ENCODE measurements at regions of chr19 and their contacts with region 1.

Region 1: DNA sequence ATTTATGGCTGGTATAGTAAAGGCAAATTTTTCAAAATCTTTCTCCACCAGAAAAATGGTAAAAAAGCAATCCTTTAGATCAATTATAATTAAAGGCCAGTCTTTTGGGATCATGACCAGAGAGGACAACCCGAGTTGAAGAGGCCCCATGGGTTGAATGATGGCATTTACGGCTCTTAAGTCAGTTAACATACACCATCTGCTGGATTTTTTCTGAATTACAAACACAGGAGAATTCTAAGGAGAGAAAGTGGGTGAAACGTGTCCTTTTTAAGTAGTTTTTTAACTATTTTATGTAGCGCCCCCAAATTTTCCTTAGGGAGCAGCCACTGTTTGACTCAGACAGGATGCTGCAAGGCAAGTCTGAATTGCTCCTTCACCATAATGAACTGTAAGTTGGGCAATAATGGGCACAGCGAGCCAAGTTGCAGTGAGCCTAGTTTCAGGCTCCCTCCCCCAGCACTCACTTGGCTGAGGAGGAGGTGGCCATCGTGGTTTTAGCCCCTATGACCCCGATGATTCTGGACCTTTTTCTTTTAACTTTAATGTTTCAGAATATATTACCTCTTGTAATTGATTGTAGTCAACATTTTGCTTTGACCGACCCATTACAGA is 13.6 kb upstream of the ZNF611 start:
- DNase-seq: peak; percentile 60
- ATAC-seq: no peak
- H3K4me3 ChIP-seq: no peak overlapping the region
- H3K4me3 Mint-ChIP-seq: no peak overlapping the region
- H3K27ac ChIP-seq: no peak overlapping the region
- H3K27ac Mint-ChIP-seq: no peak overlapping the region
- H3K4me1 ChIP-seq: peaks cover 0 to 3% of the 10 kb centered on the region in 2 donors
- H3K4me1 Mint-ChIP-seq: no peaks in the 10 kb centered on the region
- H3K27me3 ChIP-seq: no peaks in the 10 kb centered on the region
- H3K27me3 Mint-ChIP-seq: no peaks in the 10 kb centered on the region
- CTCF ChIP-seq: peak; percentile 59

Region 2: DNA sequence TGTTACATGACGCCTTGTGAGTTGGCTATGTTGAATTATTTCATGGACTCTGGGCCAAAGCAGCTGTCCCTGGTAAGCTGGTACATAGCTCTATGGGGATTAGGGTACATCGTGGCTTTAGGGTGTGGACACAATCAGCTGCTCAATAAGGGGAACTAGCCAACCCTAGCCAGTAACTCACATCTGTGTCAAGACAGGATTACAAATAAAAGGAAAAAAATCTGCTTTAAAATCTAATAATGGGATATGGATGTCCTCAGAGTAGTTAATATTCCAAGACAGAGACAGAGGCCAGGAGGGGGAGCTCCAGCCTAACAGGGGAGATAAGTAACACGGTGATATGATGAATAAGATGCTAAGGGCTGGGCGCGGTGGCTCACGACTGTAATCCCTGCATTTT is 500.2 kb before region 1 on chr19:
- CTCF ChIA-PET with region 1: interaction called, 12 read pairs
- POLR2A ChIA-PET with region 1: no interaction called
- intact Hi-C with region 1: no loop called
- DNase-seq: peak; percentile 61
- ATAC-seq: no peak
- H3K4me3 ChIP-seq: no peak overlapping the region
- H3K4me3 Mint-ChIP-seq: no peak overlapping the region
- H3K27ac ChIP-seq: no peak overlapping the region
- H3K27ac Mint-ChIP-seq: no peak overlapping the region
- H3K4me1 ChIP-seq: no peaks in the 10 kb centered on the region
- H3K4me1 Mint-ChIP-seq: no peaks in the 10 kb centered on the region
- H3K27me3 ChIP-seq: peaks cover 0 to 2% (median 0%) of the 10 kb centered on the region in 4 experiments
- H3K27me3 Mint-ChIP-seq: no peaks in the 10 kb centered on the region
- CTCF ChIP-seq: peak; percentile 47

Region 3: DNA sequence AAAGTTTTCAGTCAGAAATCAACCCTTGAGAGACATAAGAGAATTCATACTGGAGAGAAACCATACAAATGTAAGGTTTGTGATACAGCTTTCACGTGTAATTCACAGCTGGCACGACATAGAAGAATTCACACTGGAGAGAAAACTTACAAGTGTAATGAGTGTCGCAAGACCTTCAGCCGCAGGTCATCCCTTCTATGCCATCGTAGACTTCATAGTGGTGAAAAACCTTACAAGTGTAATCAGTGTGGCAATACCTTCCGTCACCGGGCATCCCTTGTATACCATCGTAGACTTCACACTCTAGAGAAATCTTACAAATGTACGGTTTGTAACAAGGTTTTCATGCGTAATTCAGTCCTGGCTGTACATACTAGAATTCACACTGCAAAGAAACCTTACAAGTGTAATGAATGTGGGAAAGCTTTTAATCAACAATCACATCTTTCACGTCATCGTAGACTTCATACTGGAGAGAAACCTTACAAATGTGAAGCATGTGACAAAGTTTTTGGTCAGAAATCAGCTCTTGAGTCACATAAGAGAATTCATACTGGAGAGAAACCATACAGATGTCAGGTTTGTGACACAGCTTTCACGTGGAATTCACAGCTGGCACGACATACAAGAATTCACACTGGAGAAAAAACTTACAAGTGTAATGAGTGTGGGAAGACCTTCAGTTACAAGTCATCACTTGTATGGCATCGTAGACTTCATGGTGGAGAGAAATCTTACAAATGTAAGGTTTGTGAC is 194.0 kb before region 1 on chr19:
- CTCF ChIA-PET with region 1: no interaction called
- POLR2A ChIA-PET with region 1: no interaction called
- intact Hi-C with region 1: no loop called
- DNase-seq: no peak
- ATAC-seq: no peak
- H3K4me3 ChIP-seq: no peak overlapping the region
- H3K4me3 Mint-ChIP-seq: no peak overlapping the region
- H3K27ac ChIP-seq: no peak overlapping the region
- H3K27ac Mint-ChIP-seq: no peak overlapping the region
- H3K4me1 ChIP-seq: no peaks in the 10 kb centered on the region
- H3K4me1 Mint-ChIP-seq: no peaks in the 10 kb centered on the region
- H3K27me3 ChIP-seq: no peaks in the 10 kb centered on the region
- H3K27me3 Mint-ChIP-seq: no peaks in the 10 kb centered on the region
- CTCF ChIP-seq: no peak

Region 4: GRCh38 chr19:52734893-52735661 is 13.4 kb before region 1 on chr19 and contains the start of gene ZNF611:
- CTCF ChIA-PET with region 1: no interaction called
- POLR2A ChIA-PET with region 1: no interaction called
- intact Hi-C with region 1: no loop called
- DNase-seq: peak; percentile 98
- ATAC-seq: peak; percentile 98
- H3K4me3 ChIP-seq: peak within 1 kb of the TSS; percentile 67 to 96 (median 90)
- H3K4me3 Mint-ChIP-seq: peak within 1 kb of the TSS; percentile 93
- H3K27ac ChIP-seq: peak within 1 kb of the TSS; percentile 74 to 91
- H3K27ac Mint-ChIP-seq: peak within 1 kb of the TSS; percentile 92
- H3K4me1 ChIP-seq: peaks cover 10 to 19% of the 10 kb centered on the region in 2 donors
- H3K4me1 Mint-ChIP-seq: peaks cover 23% of the 10 kb centered on the region
- H3K27me3 ChIP-seq: no peaks in the 10 kb centered on the region
- H3K27me3 Mint-ChIP-seq: no peaks in the 10 kb centered on the region
- CTCF ChIP-seq: peak; percentile 79
- total RNA-seq, gene ZNF611: 51.5 and 57.9 TPM in 2 replicates

Region 5: GRCh38 chr19:52786457-52787359 is 38.3 kb after region 1 on chr19 and contains the start of gene ZNF600:
- CTCF ChIA-PET with region 1: no interaction called
- POLR2A ChIA-PET with region 1: no interaction called
- intact Hi-C with region 1: no loop called
- DNase-seq: peak; percentile 83
- ATAC-seq: peak; percentile 99
- H3K4me3 ChIP-seq: peak within 1 kb of the TSS; percentile 63 to 96 (median 78)
- H3K4me3 Mint-ChIP-seq: peak within 1 kb of the TSS; percentile 97
- H3K27ac ChIP-seq: peak within 1 kb of the TSS; percentile 40 to 69
- H3K27ac Mint-ChIP-seq: peak within 1 kb of the TSS; percentile 92
- H3K4me1 ChIP-seq: peaks cover 4 to 18% of the 10 kb centered on the region in 2 donors
- H3K4me1 Mint-ChIP-seq: peaks cover 31% of the 10 kb centered on the region
- H3K27me3 ChIP-seq: no peaks in the 10 kb centered on the region
- H3K27me3 Mint-ChIP-seq: no peaks in the 10 kb centered on the region
- CTCF ChIP-seq: peak; percentile 21
- total RNA-seq, gene ZNF600: 41.7 and 51.6 TPM in 2 replicates